Naive thymus-derived CD4-positive, alpha-beta T cell (primary cell): ENCODE measurements at regions of chr10 and their contacts with region 1.

Region 1: DNA sequence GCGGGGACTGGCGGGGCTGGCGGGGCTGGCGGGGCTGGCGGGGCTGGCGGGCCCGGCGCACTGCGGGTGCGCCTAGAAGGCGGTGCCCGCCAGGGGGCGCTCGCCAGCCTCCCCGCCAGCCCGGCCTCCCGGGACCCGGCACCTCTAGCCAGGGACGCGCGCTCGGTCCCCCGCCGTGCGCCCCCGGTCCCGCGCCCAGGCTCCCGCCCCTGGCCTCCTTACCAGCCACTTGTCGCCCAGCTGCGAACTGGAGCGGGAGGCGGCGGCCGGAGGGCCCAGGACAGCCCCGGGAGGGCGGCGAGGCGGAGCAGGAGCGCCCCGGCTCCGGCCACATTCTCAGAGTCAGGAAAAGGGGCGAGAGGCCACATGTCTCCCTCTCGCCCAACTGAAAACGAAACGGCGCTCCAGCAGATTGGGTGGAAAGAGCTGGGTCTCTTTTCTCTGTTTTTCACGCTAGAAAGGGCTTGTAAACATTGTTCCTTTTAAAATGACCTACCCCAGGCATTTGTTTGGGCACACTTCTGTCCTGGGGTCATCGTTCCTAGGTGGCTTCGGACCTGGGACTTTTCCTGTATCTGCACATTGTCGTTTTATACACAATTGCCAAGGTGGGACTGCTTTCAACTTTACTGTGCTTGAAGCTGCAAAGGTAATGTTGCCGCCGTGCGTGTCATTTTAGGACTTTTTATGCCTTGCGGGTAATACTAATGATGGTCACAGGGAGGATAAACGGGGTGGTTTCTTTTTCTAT is 378 bp upstream of the PRKCQ start:
- DNase-seq: peak; percentile 74 to 95 (median 84)
- ATAC-seq: peak; percentile 92
- H3K4me3 ChIP-seq: peak overlapping the region; percentile 88
- H3K4me3 Mint-ChIP-seq: peak overlapping the region; percentile 86 to 99 (median 93)
- H3K27ac ChIP-seq: peak overlapping the region; percentile 94
- H3K27ac Mint-ChIP-seq: peak overlapping the region; percentile 94 to 99 (median 98)
- H3K4me1 ChIP-seq: peaks cover 33 to 42% of the 10 kb centered on the region in 2 donors
- H3K4me1 Mint-ChIP-seq: peaks cover 35 to 67% (median 56%) of the 10 kb centered on the region in 7 donors
- H3K27me3 ChIP-seq: no peaks in the 10 kb centered on the region
- H3K27me3 Mint-ChIP-seq: no peaks in the 10 kb centered on the region

Region 2: DNA sequence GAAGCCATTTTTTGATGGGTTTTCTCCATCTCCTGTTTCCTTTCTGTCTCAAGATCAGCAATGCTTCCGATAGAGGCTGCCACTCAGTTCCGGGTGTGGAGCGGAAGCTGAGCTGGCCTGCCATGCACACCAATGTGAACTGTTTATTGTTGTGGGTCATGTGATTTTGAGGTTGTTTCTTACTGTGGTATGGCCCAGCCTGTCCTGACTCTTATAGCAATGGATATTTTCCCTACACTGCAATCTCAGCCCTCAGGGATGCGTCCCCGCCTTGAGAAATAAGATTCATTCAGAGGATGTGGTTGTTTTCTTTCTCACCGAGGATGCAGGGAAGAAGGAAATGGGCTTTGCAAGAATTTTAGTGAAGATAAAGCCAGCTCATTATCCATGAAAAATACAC is 243.1 kb before region 1 on chr10:
- CTCF ChIA-PET with region 1: no interaction called
- POLR2A ChIA-PET with region 1: no interaction called
- intact Hi-C with region 1: no loop called
- DNase-seq: no peak
- ATAC-seq: no peak
- H3K4me3 ChIP-seq: no peak overlapping the region
- H3K4me3 Mint-ChIP-seq: no peak overlapping the region
- H3K27ac ChIP-seq: no peak overlapping the region
- H3K27ac Mint-ChIP-seq: no peak overlapping the region
- H3K4me1 ChIP-seq: no peaks in the 10 kb centered on the region
- H3K4me1 Mint-ChIP-seq: peaks cover 0 to 6% (median 0%) of the 10 kb centered on the region in 7 donors
- H3K27me3 ChIP-seq: no peaks in the 10 kb centered on the region
- H3K27me3 Mint-ChIP-seq: no peaks in the 10 kb centered on the region

Region 3: GRCh38 chr10:6473901-6474370 is 106.5 kb before region 1 on chr10:
- CTCF ChIA-PET with region 1: interaction called, 8 read pairs
- POLR2A ChIA-PET with region 1: interaction called, 4 read pairs
- intact Hi-C with region 1: loop called (anchors 1 kb)
- DNase-seq: peak in 8 of 9 donors; percentile 48 to 72 (median 62)
- ATAC-seq: peak; percentile 77
- H3K4me3 ChIP-seq: peak overlapping the region; percentile 63
- H3K4me3 Mint-ChIP-seq: peak overlapping the region; percentile 75 to 92 (median 88)
- H3K27ac ChIP-seq: peak overlapping the region; percentile 78
- H3K27ac Mint-ChIP-seq: peak overlapping the region; percentile 87 to 100 (median 96)
- H3K4me1 ChIP-seq: peaks cover 20 to 29% of the 10 kb centered on the region in 2 donors
- H3K4me1 Mint-ChIP-seq: peaks cover 46 to 81% (median 67%) of the 10 kb centered on the region in 7 donors
- H3K27me3 ChIP-seq: no peaks in the 10 kb centered on the region
- H3K27me3 Mint-ChIP-seq: no peaks in the 10 kb centered on the region

Region 4: DNA sequence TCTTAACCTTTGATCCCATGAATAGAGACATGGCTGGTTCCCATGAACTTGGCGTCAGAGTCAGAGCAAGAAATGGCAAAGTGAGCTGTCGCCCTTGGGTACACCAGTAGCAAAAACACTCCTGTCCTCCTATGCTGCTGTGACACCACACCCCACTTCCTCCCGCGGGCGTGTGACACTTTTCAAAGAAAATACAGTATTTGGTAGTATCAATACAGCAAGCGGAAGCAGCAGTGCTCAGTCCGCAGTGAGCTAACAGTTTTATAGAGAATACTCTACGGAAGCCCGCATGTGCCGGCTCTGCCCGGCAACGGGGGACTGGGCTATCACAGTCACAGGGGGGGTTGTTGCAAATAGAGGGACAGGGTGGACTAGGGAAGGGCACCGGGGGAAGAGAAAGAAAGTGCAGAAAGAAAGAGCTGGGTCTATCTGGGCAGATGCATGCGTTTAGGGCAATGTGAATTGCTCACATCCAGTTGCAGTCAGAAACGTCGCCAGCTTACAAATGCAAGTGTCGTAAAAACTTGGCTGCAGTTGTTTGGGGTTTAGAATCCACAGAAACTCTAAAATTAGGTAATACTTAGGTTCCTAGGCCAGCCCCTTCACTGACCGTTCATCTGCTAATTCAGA is 50.1 kb before region 1 on chr10:
- CTCF ChIA-PET with region 1: interaction called, 4 read pairs
- POLR2A ChIA-PET with region 1: interaction called, 97 read pairs
- intact Hi-C with region 1: loop called (anchors 1 kb)
- DNase-seq: peak; percentile 37 to 89 (median 85)
- ATAC-seq: peak; percentile 96
- H3K4me3 ChIP-seq: peak overlapping the region; percentile 34
- H3K4me3 Mint-ChIP-seq: peak overlapping the region; percentile 84 to 95 (median 88)
- H3K27ac ChIP-seq: peak overlapping the region; percentile 74
- H3K27ac Mint-ChIP-seq: peak overlapping the region; percentile 97 to 100 (median 99)
- H3K4me1 ChIP-seq: peaks cover 46 to 58% of the 10 kb centered on the region in 2 donors
- H3K4me1 Mint-ChIP-seq: peaks cover 67 to 99% (median 91%) of the 10 kb centered on the region in 7 donors
- H3K27me3 ChIP-seq: no peaks in the 10 kb centered on the region
- H3K27me3 Mint-ChIP-seq: no peaks in the 10 kb centered on the region

Region 5: DNA sequence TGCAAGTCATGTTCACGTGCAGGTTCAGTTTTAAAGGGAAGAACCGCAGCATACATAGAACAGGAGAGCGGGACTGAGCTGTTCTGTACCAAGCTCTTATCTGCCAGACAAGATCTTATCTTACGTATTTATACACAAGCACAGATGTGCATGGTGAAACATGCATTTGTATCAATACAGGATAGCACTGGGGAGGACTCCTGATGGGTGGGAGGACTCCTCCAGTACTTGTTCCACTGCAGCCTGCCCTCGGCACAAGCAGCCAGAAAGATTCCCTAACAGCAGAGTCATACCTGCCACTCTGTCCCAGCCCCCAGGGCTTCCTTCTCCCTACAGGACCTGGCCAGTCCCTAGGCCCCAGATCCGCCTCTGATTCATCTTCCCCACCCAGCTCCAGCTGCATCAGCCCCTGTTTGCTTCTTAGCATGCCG is 12.8 kb after region 1 on chr10:
- CTCF ChIA-PET with region 1: interaction called, 206 read pairs
- POLR2A ChIA-PET with region 1: interaction called, 378 read pairs
- intact Hi-C with region 1: loop called (anchors 1 kb)
- DNase-seq: peak in 5 of 9 donors; percentile 29 to 76 (median 61)
- ATAC-seq: peak; percentile 73
- H3K4me3 ChIP-seq: peak overlapping the region; percentile 38
- H3K4me3 Mint-ChIP-seq: peak overlapping the region; percentile 53 to 97 (median 80)
- H3K27ac ChIP-seq: peak overlapping the region; percentile 94
- H3K27ac Mint-ChIP-seq: peak overlapping the region; percentile 96 to 99 (median 97)
- H3K4me1 ChIP-seq: peaks cover 34 to 95% of the 10 kb centered on the region in 2 donors
- H3K4me1 Mint-ChIP-seq: peaks cover 45 to 100% (median 98%) of the 10 kb centered on the region in 7 donors
- H3K27me3 ChIP-seq: no peaks in the 10 kb centered on the region
- H3K27me3 Mint-ChIP-seq: no peaks in the 10 kb centered on the region

Region 6: DNA sequence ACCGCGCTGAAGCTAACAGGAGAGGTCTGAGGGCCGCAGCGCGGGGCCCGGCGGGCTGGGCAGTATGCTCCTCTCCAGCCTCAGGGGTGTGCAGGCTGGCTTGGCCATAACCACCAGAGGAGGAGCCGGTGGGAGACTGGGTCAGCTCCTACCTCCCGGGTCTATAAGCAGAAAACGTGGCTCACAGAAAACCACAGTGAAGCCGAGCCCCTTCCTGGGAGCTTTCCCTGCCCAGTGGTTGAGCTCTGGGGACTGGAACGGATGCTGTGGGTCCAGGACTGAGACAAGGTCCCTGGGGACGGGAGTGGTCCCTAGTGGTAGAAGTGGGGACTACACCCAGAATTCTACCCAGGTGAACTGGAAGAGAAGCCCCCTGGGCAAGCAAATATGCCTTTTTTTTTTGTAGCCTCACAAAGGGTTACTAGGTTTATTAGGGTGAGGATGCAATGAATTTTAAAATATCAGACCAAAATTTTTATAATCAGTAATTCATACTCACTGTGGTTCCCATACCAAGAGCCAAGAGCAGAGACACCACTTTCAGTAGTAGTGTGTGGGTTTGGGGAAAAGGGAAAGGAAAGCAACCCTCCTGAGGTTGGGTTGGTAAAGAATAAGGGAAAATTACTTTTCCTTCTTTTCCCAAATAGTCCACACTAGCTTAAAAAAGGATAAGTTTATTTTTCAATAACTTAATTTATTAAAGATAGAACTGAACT is 67.5 kb after region 1 on chr10:
- CTCF ChIA-PET with region 1: interaction called, 8 read pairs
- POLR2A ChIA-PET with region 1: interaction called, 3 read pairs
- intact Hi-C with region 1: loop called (anchors 1 kb)
- DNase-seq: peak; percentile 37 to 75 (median 64)
- ATAC-seq: peak; percentile 94
- H3K4me3 ChIP-seq: no peak overlapping the region
- H3K4me3 Mint-ChIP-seq: peak overlapping the region in 1 of 10 donors; percentile 32
- H3K27ac ChIP-seq: no peak overlapping the region
- H3K27ac Mint-ChIP-seq: peak overlapping the region in 3 of 9 donors; percentile 19 to 67 (median 38)
- H3K4me1 ChIP-seq: peaks cover 5 to 10% of the 10 kb centered on the region in 2 donors
- H3K4me1 Mint-ChIP-seq: peaks cover 0 to 46% (median 27%) of the 10 kb centered on the region in 7 donors
- H3K27me3 ChIP-seq: no peaks in the 10 kb centered on the region
- H3K27me3 Mint-ChIP-seq: no peaks in the 10 kb centered on the region